Heart right ventricle (tissue), 16 donors: ENCODE measurements at regions of chr1 and their contacts with region 1.

Region 1: GRCh38 chr1:107897438-107898345 is 67.3 kb downstream of the VAV3 start:
- DNase-seq: no peak
- ATAC-seq: no peak
- H3K4me3 ChIP-seq: no peak overlapping the region
- H3K27ac ChIP-seq: peak overlapping the region in 2 of 10 donors; percentile 2 to 4
- H3K4me1 ChIP-seq: peaks cover 0 to 32% (median 7%) of the 10 kb centered on the region in 9 donors
- H3K27me3 ChIP-seq: no peaks in the 10 kb centered on the region
- CTCF ChIP-seq: peak in 2 of 9 donors; percentile 14 to 15

Region 2: DNA sequence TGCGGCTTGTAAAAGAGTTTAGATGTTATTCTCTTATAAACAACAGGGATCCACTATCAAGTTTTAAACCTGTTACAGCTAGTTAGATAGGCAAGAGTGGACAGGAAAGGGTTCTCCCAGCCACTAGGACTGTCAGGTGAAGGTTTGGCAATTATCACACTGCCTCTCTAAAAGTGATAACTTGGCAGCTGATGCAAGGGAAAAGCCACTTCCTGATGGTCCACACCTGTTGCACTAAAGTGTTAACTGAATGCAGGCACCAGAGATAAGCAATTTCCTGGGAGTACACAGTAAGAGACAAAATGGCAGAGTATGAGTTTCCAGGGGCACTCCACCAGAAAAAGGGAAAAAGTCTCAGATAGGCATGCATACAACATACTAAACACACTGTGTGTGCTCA is 32.1 kb before region 1 on chr1:
- intact Hi-C with region 1: loop called in 1 of 10 experiments (anchors 1 kb)
- DNase-seq: no peak
- ATAC-seq: no peak
- H3K4me3 ChIP-seq: no peak overlapping the region
- H3K27ac ChIP-seq: peak overlapping the region in 1 of 10 donors; percentile 27
- H3K4me1 ChIP-seq: peaks cover 0 to 16% (median 0%) of the 10 kb centered on the region in 9 donors
- H3K27me3 ChIP-seq: no peaks in the 10 kb centered on the region
- CTCF ChIP-seq: no peak